ENCODE measurements at regions of chr5 and their contacts with region 1.

Region 1: DNA sequence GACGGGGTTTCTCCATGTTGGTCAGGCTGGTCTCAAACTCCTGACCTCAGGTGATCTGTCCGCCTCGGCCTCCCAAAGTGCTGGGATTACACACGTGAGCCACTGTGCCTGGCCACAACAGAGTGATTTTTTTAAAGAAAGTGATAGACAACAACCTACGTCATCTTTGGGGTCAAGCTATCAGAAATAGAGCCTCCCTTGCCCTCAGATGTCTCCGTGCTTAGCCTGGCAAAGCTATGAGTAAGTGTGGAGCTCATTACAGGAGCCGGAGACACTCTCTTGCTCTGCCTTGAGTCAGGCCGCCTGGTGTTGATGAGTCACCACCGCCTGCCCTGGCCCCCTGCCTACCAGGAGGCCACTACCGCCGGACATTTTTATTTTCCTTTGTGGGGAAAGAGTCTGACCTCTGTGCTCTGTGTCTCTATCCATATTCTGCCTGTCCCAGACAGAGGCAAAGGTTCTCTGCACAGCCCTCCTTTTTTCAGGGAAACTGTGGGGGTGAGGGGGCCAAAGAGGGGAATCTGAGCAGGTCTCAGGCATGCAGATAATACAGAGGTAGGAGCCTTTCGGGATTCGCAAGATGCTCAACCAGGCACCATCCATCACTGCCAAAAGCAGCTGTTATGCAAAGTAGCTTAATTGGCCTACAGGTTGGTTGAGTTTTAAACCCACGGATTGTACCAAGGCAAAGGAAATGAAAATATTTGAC is 123.7 kb upstream of the CPEB4 start:
- DNase-seq: peak; percentile 66 to 90 (median 86)
- ATAC-seq: peak; percentile 11 to 76 (median 67)
- H3K4me3 ChIP-seq: no peak overlapping the region
- H3K27ac ChIP-seq: peak overlapping the region in 11 of 12 donors; percentile 68 to 95 (median 78)
- H3K4me1 ChIP-seq: peaks cover 0 to 40% (median 19%) of the 10 kb centered on the region in 12 donors
- H3K27me3 ChIP-seq: no peaks in the 10 kb centered on the region
- CTCF ChIP-seq: peak in 1 of 12 donors; percentile 8
- POLR2A ChIP-seq: no peak

Region 2: DNA sequence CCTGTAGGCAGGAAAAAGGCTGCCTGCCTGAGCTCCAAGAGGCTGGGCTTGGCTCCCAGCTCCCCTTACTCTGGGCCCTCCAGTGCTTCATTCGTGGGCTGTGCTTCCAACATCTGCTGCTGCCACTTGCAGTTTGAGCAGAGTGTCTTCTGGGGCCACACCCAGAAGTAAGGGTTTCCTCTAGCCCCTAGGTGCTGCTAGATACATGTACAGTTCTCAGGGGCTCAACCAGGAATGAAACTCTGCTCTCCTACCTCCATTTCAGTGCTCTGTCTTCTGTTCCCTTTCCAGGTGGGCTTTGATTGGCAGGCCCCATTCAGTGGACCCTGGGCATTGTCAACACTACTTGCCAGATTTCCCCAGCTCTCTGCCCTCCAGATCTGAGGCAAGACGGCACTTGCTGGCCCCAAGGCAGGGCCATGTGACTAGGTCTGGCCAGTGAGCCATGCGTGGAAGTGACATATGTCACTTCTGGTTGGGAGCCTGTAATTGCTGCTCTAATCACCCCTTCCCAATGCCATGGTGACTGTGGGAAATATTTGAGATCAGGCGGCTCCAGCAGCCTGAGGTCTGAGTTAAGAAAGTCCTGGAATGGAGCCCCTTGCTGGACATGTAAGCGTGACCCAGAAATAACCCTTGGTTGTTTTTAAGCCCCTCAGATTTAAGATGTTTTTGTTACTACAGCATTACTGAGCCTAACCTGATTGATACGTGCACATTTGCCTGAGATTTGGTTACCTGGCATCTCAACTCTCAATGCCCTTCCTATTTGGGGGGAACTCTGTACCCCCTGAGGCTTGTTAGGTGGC is 138.6 kb before region 1 on chr5:
- intact Hi-C with region 1: loop called in 5 of 10 experiments (anchors 5 kb)
- DNase-seq: peak in 1 of 5 donors; percentile 31
- ATAC-seq: peak; percentile 60 to 82 (median 68)
- H3K4me3 ChIP-seq: no peak overlapping the region
- H3K27ac ChIP-seq: peak overlapping the region in 5 of 12 donors; percentile 1 to 54 (median 36)
- H3K4me1 ChIP-seq: peaks cover 0 to 17% (median 5%) of the 10 kb centered on the region in 12 donors
- H3K27me3 ChIP-seq: no peaks in the 10 kb centered on the region
- CTCF ChIP-seq: peak in 6 of 12 donors; percentile 6 to 44 (median 19)
- POLR2A ChIP-seq: no peak

Region 3: DNA sequence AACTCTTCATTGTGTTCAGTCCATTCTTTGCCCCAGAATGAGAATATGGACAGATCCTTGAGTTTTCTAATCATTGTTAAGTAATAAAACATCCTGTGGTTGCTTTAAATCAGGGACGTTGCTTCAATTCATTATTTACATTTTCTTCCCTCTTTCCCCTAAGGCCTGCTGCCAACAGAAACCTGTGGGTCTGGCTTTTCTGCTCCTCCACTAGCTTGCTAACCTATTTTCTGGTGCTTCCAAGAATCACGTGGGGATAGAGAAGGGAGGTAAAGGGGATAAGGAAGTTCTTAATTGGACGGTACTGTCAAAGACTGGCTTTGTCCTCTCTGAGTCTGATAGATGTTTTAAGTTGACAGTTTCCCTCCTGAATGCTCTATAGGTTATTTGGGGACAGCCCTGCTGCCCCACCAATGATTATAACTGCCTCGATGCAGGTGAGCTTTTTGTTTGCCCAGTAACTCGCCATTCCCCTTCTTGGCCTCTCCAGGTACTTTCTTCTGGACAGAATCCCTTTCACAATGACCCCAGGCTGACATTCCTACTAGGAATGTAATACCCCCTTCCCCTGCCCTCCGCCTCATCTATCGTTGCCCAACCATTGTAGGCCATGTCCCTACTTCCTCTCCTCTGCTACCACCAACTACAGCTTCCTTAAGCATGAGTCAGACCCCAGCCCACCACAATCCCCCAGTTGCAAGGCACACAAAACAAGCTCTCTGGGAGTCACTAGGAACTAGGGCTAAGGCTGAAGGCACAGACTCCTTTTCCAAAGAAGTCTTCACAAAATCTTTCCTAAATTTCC is 103.8 kb after region 1 on chr5:
- intact Hi-C with region 1: loop called in 1 of 10 experiments (anchors 5 kb)
- DNase-seq: no peak
- ATAC-seq: no peak
- H3K4me3 ChIP-seq: no peak overlapping the region
- H3K27ac ChIP-seq: peak overlapping the region in 1 of 12 donors; percentile 16
- H3K4me1 ChIP-seq: peaks cover 0 to 46% (median 0%) of the 10 kb centered on the region in 12 donors
- H3K27me3 ChIP-seq: no peaks in the 10 kb centered on the region
- CTCF ChIP-seq: no peak
- POLR2A ChIP-seq: no peak

Region 4: GRCh38 chr5:173925448-173926071 is 161.1 kb after region 1 on chr5:
- intact Hi-C with region 1: no loop called
- DNase-seq: peak in 4 of 5 donors; percentile 42 to 62 (median 52)
- ATAC-seq: peak in 1 of 4 donors; percentile 14
- H3K4me3 ChIP-seq: peak overlapping the region in 2 of 12 donors; percentile 3 to 10
- H3K27ac ChIP-seq: peak overlapping the region; percentile 58 to 89 (median 86)
- H3K4me1 ChIP-seq: peaks cover 15 to 97% (median 67%) of the 10 kb centered on the region in 12 donors
- H3K27me3 ChIP-seq: no peaks in the 10 kb centered on the region
- CTCF ChIP-seq: peak; percentile 21 to 70 (median 46)
- POLR2A ChIP-seq: no peak

Region 5: GRCh38 chr5:173954671-173955521 is 190.4 kb after region 1 on chr5:
- intact Hi-C with region 1: loop called in 2 of 10 experiments (anchors 10 kb)
- DNase-seq: peak in 2 of 5 donors; percentile 28 to 52
- ATAC-seq: peak; percentile 76 to 91 (median 88)
- H3K4me3 ChIP-seq: no peak overlapping the region
- H3K27ac ChIP-seq: peak overlapping the region; percentile 36 to 91 (median 78)
- H3K4me1 ChIP-seq: peaks cover 0 to 64% (median 21%) of the 10 kb centered on the region in 12 donors
- H3K27me3 ChIP-seq: no peaks in the 10 kb centered on the region
- CTCF ChIP-seq: no peak
- POLR2A ChIP-seq: peak in 1 of 2 donors; percentile 26

Region 6: GRCh38 chr5:173972925-173973615 is 208.6 kb after region 1 on chr5:
- intact Hi-C with region 1: loop called in 7 of 10 experiments (anchors 5 to 10 kb)
- DNase-seq: peak; percentile 78 to 84 (median 80)
- ATAC-seq: peak; percentile 73 to 84 (median 80)
- H3K4me3 ChIP-seq: peak overlapping the region in 11 of 12 donors; percentile 33 to 65 (median 51)
- H3K27ac ChIP-seq: peak overlapping the region in 10 of 12 donors; percentile 1 to 83 (median 65)
- H3K4me1 ChIP-seq: peaks cover 0 to 25% (median 9%) of the 10 kb centered on the region in 12 donors
- H3K27me3 ChIP-seq: peaks cover 0 to 4% (median 0%) of the 10 kb centered on the region in 9 donors
- CTCF ChIP-seq: peak; percentile 66 to 93 (median 86)
- POLR2A ChIP-seq: no peak

Measured in heart left ventricle (tissue), 16 donors.